ENCODE measurements at regions of chr16 and their contacts with region 1.

Region 1: GRCh38 chr16:25434064-25434463 is 176.4 kb upstream of the ZKSCAN2 start:
- DNase-seq: no peak
- H3K4me3 ChIP-seq: no peak overlapping the region
- H3K27ac ChIP-seq: no peak overlapping the region
- H3K4me1 ChIP-seq: no peaks in the 10 kb centered on the region
- H3K27me3 ChIP-seq: no peaks in the 10 kb centered on the region
- CTCF ChIP-seq: no peak
- POLR2A ChIP-seq: no peak

Region 2: DNA sequence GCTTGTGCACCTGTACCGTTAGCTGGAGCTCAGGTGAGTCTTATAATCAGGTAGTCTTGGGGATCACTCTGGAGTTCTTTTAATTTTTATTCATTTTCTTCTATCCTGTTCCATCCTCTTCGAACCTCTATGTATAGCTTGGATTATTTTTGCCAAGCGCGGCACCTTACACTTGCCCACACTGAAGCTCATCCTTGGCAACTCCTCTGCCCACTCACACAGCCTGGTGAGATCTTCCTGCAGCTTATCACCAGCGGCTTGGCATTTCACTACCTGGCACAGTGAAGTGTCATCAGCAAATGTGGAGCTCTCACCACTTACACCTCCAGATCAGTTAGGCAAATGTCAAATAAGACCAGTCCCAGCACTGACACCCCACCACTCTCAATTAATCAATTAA is 1061.2 kb before region 1 on chr16:
- intact Hi-C with region 1: loop called (anchors 10 kb)
- DNase-seq: no peak
- H3K4me3 ChIP-seq: no peak overlapping the region
- H3K27ac ChIP-seq: no peak overlapping the region
- H3K4me1 ChIP-seq: no peaks in the 10 kb centered on the region
- H3K27me3 ChIP-seq: no peaks in the 10 kb centered on the region
- CTCF ChIP-seq: no peak
- POLR2A ChIP-seq: no peak

Region 3: GRCh38 chr16:25264597-25264996 is 169.5 kb before region 1 on chr16:
- intact Hi-C with region 1: no loop called
- DNase-seq: no peak
- H3K4me3 ChIP-seq: no peak overlapping the region
- H3K27ac ChIP-seq: no peak overlapping the region
- H3K4me1 ChIP-seq: no peaks in the 10 kb centered on the region
- H3K27me3 ChIP-seq: no peaks in the 10 kb centered on the region
- CTCF ChIP-seq: no peak
- POLR2A ChIP-seq: no peak

Region 4: DNA sequence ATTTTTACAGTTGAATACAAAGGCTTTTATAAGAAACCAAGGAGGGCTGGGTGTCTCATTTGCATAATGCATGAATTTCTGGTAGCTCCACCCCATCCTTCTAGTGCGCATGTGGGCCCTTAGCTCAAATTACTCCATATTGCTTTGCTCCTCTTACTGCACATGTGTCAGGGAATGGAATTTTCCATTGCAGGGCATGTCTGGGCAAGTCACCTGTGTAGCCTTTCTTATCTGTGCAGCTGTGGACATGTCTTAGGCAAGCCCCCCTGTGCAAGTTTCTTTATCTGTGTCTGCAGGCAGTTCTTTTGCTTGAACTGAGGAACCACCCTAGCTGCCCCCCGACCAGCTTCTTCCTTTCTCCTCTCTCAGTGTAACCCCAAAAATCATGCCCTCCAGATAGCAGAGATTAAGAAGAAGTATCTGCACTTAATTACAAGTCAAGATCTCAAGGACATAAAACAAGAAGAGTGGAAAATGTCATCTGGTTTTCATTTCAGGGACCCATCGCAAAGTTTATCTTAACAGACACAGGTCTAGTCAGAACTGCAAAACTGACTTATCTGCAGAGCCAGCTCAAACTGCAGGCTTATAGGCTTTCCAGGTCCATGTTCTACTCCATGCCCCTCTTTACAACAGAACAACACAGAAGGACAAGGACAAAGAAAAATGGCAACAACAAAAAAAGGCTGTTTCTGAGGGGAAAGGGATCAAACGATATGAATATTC is 119.8 kb after region 1 on chr16:
- intact Hi-C with region 1: no loop called
- DNase-seq: no peak
- H3K4me3 ChIP-seq: no peak overlapping the region
- H3K27ac ChIP-seq: no peak overlapping the region
- H3K4me1 ChIP-seq: no peaks in the 10 kb centered on the region
- H3K27me3 ChIP-seq: no peaks in the 10 kb centered on the region
- CTCF ChIP-seq: no peak
- POLR2A ChIP-seq: no peak